CD4-positive, alpha-beta T cell (primary cell): ENCODE measurements at regions of chr15 and their contacts with region 1.

Region 1: DNA sequence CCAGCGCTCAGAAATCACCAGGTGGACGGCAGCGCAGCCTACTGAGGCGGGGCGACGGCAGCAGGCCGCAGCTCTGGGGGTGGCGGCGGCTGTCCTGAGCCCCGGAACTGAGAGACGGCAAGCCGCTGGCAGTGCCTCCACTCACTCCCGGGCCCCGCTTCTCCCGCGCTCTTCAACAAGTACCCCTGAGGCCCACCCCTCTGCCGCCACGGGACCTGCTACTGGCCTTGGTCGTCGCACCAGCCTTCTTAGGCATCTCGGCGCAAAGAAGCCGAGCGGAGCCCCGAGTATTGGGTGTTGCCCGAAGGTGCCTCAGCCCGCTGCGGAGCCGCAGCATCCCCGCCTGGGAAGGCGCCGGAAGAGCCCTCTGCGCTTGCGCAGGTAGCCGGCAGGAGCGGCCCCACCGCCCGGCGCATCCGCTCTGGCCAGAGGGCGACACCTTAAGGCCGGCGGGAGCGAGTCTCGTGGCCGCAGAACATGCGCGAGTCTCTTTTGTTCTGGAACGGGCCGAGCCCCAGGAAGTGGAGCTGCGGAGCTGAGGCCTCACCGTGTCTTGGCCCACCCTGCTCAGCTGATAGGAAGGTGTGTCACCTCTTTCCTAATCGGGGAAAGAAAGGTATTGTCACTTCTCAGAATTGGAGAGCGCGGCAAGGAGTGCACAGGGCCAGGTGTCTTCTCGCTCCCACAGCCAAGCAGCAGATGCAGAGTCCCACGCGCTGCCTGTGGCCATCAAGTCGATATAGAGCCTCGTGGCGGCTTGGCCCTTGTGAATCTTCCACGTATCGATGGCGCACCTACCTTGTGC is at the start of gene C15orf40:
- DNase-seq: peak; percentile 68 to 94 (median 82)
- ATAC-seq: peak; percentile 81
- H3K4me3 ChIP-seq: peak within 1 kb of the TSS; percentile 82
- H3K4me3 Mint-ChIP-seq: peak within 1 kb of the TSS; percentile 100
- H3K27ac ChIP-seq: peak within 1 kb of the TSS; percentile 70 to 84
- H3K27ac Mint-ChIP-seq: peak within 1 kb of the TSS; percentile 88
- H3K4me1 ChIP-seq: peaks cover 24% of the 10 kb centered on the region
- H3K4me1 Mint-ChIP-seq: peaks cover 56% of the 10 kb centered on the region
- H3K27me3 ChIP-seq: no peaks in the 10 kb centered on the region
- H3K27me3 Mint-ChIP-seq: no peaks in the 10 kb centered on the region
- CTCF ChIP-seq: no peak
- total RNA-seq, gene C15orf40: 7.4 to 11.0 TPM

Region 2: DNA sequence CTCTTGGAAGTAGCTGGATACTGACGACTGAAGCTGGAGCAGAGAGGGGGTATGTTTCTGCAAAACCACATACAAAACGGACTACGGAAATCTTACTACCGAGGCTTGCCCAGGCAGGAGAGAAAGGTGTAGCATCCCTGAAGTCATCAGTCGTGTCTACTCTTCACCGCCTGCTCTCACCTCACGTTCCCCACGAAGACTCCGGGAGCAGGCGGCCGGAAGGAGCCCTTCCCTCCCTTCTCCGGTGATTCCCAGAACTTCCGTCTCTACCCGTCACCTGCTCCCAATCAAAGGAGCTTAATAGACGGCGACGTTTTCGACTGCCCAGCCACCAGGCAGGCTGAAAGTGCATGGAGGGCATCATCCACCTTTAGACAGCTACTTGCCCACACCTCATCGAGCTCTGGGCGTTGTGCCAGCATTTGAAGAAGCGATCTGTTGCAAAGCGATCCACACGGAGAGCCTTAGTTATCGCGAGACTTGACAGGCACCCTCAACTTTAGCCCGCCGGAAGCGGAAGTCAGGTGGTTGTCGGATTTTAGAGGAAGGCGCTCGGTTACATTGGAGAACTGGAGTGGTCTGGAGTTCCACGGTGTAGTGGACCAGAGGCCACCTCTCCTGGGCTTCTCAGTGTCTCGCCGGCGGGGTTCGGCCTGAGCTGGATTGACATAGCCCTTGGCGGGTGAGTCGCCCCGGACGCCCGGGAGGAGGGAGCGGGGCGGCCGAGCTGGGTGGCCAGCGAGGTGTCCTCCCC is 25.6 kb before region 1 on chr15 and contains the start of gene RAMAC:
- CTCF ChIA-PET with region 1: interaction called, 22 read pairs
- POLR2A ChIA-PET with region 1: interaction called, 10 read pairs
- intact Hi-C with region 1: loop called in 1 of 2 experiments (anchors 2 kb)
- DNase-seq: peak; percentile 84 to 98 (median 92)
- ATAC-seq: peak; percentile 92
- H3K4me3 ChIP-seq: peak within 1 kb of the TSS; percentile 94
- H3K4me3 Mint-ChIP-seq: peak within 1 kb of the TSS; percentile 97
- H3K27ac ChIP-seq: peak within 1 kb of the TSS; percentile 54 to 65
- H3K27ac Mint-ChIP-seq: peak within 1 kb of the TSS; percentile 87
- H3K4me1 ChIP-seq: peaks cover 18% of the 10 kb centered on the region
- H3K4me1 Mint-ChIP-seq: peaks cover 27% of the 10 kb centered on the region
- H3K27me3 ChIP-seq: no peaks in the 10 kb centered on the region
- H3K27me3 Mint-ChIP-seq: no peaks in the 10 kb centered on the region
- CTCF ChIP-seq: no peak
- total RNA-seq, gene RAMAC: 25.5 to 26.5 TPM

Region 3: DNA sequence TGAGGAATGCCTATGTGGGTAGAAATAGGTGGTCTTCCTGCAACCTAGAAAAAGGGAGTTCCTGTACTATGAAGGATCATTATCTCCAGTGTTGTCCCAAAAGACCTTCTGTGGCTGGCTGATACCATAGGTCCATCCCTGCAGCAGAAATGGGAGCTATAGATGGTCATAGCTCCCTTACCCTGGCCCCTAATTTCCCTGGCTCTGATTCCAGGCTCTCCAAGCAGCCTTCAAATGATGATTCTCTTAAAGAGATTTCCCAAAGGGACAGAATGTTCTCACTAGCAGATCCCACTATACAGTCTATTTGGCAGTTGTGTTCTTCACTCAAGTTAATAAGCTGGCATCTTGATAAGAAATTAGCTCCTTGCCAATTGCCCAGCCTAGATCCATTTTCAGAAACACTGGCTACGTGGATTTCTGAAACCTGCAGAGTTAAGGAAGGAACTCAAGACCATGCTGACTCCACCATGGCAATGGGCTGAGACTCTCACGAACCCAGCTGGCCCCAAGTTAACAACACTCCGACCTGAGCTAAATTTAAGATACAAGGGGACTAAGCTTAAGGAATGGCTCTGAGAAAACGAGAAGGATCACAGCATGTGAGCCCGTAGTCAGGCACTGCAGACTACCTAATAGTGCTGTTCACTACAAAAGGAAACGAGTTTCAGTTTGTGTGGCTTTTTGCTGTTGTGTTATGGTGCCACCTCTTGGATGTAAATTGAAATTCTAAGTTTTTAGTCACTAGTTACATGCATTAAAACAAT is 11.4 kb before region 1 on chr15:
- CTCF ChIA-PET with region 1: interaction called, 16 read pairs
- POLR2A ChIA-PET with region 1: interaction called, 3 read pairs
- intact Hi-C with region 1: no loop called
- DNase-seq: peak in 9 of 14 experiments; percentile 2 to 74 (median 11)
- ATAC-seq: peak; percentile 95
- H3K4me3 ChIP-seq: peak overlapping the region; percentile 20
- H3K4me3 Mint-ChIP-seq: peak overlapping the region; percentile 70
- H3K27ac ChIP-seq: no peak overlapping the region
- H3K27ac Mint-ChIP-seq: peak overlapping the region; percentile 73
- H3K4me1 ChIP-seq: peaks cover 8% of the 10 kb centered on the region
- H3K4me1 Mint-ChIP-seq: peaks cover 13% of the 10 kb centered on the region
- H3K27me3 ChIP-seq: no peaks in the 10 kb centered on the region
- H3K27me3 Mint-ChIP-seq: no peaks in the 10 kb centered on the region
- CTCF ChIP-seq: peak; percentile 66

Region 4: GRCh38 chr15:83066734-83067637 is 55.5 kb after region 1 on chr15 and contains the start of gene BTBD1:
- CTCF ChIA-PET with region 1: interaction called, 6 read pairs
- POLR2A ChIA-PET with region 1: interaction called, 7 read pairs
- intact Hi-C with region 1: loop called (anchors 5 to 10 kb)
- DNase-seq: peak; percentile 53 to 90 (median 74)
- ATAC-seq: peak; percentile 73
- H3K4me3 ChIP-seq: peak within 1 kb of the TSS; percentile 82
- H3K4me3 Mint-ChIP-seq: peak within 1 kb of the TSS; percentile 88
- H3K27ac ChIP-seq: peak within 1 kb of the TSS; percentile 57 to 74
- H3K27ac Mint-ChIP-seq: peak within 1 kb of the TSS; percentile 81
- H3K4me1 ChIP-seq: peaks cover 22% of the 10 kb centered on the region
- H3K4me1 Mint-ChIP-seq: peaks cover 9% of the 10 kb centered on the region
- H3K27me3 ChIP-seq: no peaks in the 10 kb centered on the region
- H3K27me3 Mint-ChIP-seq: no peaks in the 10 kb centered on the region
- CTCF ChIP-seq: no peak
- total RNA-seq, gene BTBD1: 26.3 to 27.5 TPM

Region 5: GRCh38 chr15:83207622-83208411 is 196.3 kb after region 1 on chr15 and contains the start of gene HDGFL3:
- CTCF ChIA-PET with region 1: no interaction called
- POLR2A ChIA-PET with region 1: no interaction called
- intact Hi-C with region 1: loop called in 1 of 2 experiments (anchors 10 kb)
- DNase-seq: peak in 8 of 14 experiments; percentile 1 to 35 (median 10)
- ATAC-seq: peak; percentile 37
- H3K4me3 ChIP-seq: peak within 1 kb of the TSS; percentile 34
- H3K4me3 Mint-ChIP-seq: peak within 1 kb of the TSS; percentile 88
- H3K27ac ChIP-seq: no peak within 1 kb of the TSS
- H3K27ac Mint-ChIP-seq: peak within 1 kb of the TSS; percentile 40
- H3K4me1 ChIP-seq: peaks cover 9% of the 10 kb centered on the region
- H3K4me1 Mint-ChIP-seq: peaks cover 8% of the 10 kb centered on the region
- H3K27me3 ChIP-seq: peaks cover 24 to 33% of the 10 kb centered on the region in 2 experiments
- H3K27me3 Mint-ChIP-seq: peaks cover 28% of the 10 kb centered on the region
- CTCF ChIP-seq: no peak
- total RNA-seq, gene HDGFL3: 5.5 to 5.9 TPM